Left cardiac atrium (tissue), 4 donors: ENCODE measurements at regions of chr2 and their contacts with region 1.

Region 1: DNA sequence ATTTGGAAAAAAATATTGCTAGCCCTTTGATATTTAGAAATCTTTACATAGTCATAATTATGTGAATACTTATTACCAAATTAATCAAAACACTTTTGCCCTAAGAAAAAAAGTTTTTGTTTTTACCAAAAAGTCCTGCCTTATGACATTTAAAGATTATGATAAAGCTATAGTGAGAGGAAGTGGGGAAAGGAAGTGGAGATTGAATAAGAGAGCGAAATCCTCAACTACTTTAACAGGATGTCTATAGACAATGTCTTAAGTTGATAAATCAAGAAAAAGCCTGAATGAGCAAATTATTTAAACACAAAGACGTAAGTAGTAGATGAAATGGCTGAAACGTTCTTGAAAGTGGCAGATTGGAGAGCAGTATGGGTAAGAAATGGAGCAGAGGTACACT is 20.9 kb upstream of the VPS54 start:
- DNase-seq: no peak
- ATAC-seq: no peak

Region 2: GRCh38 chr2:64311948-64312621 is 271.9 kb after region 1 on chr2:
- intact Hi-C with region 1: no loop called
- DNase-seq: peak; percentile 89
- ATAC-seq: peak; percentile 94 to 96

Region 3: DNA sequence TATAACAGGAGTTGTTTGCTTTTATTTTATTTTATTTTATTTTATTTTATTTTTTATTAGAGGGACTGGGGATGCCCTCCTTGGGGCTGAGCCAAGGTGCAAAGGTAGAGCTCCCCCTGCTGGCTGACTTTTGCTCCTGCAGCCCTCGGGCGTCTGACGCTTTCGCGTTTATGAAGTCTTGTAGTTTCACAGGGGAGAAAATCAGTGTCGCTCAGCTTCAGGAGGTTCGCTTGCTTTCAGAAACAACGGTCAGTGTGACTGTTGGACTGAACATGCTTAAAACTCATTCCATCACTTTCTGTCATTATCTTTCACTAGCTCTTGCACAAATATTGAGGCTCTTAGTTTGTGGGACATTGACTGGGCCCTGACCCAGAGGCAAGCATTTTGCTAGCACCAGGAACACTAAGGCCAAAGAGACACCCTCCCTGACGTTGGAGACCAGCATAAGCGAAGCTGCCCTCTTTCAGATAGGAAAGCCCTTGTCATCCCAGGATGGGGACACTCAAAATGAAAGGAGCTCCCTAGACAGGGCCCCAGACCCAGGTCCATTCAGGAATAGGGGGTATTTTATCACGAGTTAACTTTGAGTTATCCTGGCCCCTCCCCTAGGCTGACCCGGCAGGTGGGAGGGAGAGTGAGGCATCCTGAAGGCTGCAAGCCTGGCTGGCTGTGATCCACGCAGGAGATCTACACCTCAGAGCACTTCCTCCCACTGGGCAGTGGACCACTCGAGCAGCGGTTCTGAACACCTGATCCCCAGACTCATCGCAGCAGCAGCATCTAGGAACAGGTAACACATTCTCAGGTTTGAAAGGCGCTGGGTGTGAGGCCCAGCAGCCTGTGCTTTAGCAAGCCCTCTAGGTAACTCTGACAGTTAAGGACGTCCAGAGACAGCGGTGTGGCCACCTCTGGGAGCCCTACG is 448.2 kb after region 1 on chr2:
- intact Hi-C with region 1: loop called in 1 of 2 experiments (anchors 10 kb)
- DNase-seq: peak; percentile 67
- ATAC-seq: peak; percentile 68 to 77